Endothelial cell of umbilical vein (primary cell): ENCODE measurements at regions of chr10 and their contacts with region 1.

Region 1: DNA sequence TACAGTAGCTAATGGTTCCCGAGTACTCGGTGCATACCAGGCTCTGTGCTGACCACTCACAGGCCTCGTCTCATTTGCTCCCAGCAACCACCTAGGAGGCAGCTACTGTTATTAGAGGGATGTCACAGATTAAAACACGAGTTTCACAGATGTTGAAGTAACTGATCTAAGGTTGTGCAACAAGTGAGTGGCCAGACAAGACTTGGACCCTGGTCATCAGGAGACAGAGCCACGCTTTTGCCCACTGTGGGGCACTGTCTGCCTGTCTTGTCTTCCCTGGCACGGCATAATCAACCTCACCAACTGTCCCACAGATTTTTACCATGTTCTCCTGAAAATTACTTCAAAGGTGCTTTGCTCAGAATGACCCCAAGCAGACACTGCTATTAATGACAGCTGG is 111.6 kb upstream of the HABP2 start:
- DNase-seq: no peak
- H3K4me3 ChIP-seq: no peak overlapping the region
- H3K27ac ChIP-seq: no peak overlapping the region
- H3K4me1 ChIP-seq: no peaks in the 10 kb centered on the region
- H3K27me3 ChIP-seq: no peaks in the 10 kb centered on the region
- CTCF ChIP-seq: peak in 1 of 2 donors; percentile 2
- POLR2A ChIP-seq: no peak

Region 2: GRCh38 chr10:113213035-113213434 is 228.2 kb before region 1 on chr10:
- CTCF ChIA-PET with region 1: no interaction called
- POLR2A ChIA-PET with region 1: no interaction called
- dilution Hi-C with region 1: no loop called
- intact Hi-C with region 1: no loop called
- DNase-seq: no peak
- H3K4me3 ChIP-seq: no peak overlapping the region
- H3K27ac ChIP-seq: no peak overlapping the region
- H3K4me1 ChIP-seq: no peaks in the 10 kb centered on the region
- H3K27me3 ChIP-seq: peaks cover 0 to 8% of the 10 kb centered on the region in 2 experiments
- CTCF ChIP-seq: no peak
- POLR2A ChIP-seq: no peak

Region 3: GRCh38 chr10:113362645-113363433 is 78.4 kb before region 1 on chr10:
- CTCF ChIA-PET with region 1: no interaction called
- POLR2A ChIA-PET with region 1: no interaction called
- dilution Hi-C with region 1: no loop called
- intact Hi-C with region 1: no loop called
- DNase-seq: no peak
- H3K4me3 ChIP-seq: no peak overlapping the region
- H3K27ac ChIP-seq: no peak overlapping the region
- H3K4me1 ChIP-seq: no peaks in the 10 kb centered on the region
- H3K27me3 ChIP-seq: peaks cover 6 to 7% of the 10 kb centered on the region in 2 experiments
- CTCF ChIP-seq: no peak
- POLR2A ChIP-seq: no peak

Region 4: DNA sequence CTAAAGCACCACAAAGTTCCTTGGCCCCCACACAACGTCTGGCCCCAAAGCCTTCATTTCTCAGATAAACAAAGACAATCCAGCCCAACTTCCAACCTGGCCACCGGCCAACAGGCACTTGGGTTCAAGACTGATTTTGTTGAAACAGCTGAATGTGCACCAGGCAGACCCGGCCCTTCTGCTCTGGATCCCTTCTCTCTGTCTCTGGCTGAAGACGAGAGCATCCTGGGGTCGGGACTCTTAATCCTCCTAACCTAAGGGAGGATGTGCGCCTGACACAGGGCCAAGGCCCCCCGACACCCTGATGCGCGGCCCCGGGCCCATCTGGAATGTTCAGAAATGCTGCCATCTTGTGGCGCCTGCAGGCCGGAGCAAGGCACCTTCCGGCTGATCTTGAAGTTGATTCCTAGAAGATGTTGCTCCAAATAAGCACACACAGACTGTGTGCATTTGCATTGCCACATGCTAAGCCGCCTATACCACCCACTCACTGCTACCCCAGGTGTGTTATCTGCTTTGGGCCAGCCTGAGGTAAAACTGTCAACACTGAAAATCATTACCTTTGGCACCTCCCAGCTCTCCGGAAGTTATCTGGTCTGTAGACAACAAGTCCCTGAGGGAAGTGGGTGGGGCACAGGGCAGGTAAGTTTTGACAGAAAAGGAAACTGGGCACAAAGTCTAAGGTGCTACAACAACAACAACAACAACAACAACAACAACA is 13.3 kb after region 1 on chr10:
- CTCF ChIA-PET with region 1: interaction called, 14 read pairs
- POLR2A ChIA-PET with region 1: no interaction called
- dilution Hi-C with region 1: no loop called
- intact Hi-C with region 1: no loop called
- DNase-seq: peak; percentile 36
- H3K4me3 ChIP-seq: no peak overlapping the region
- H3K27ac ChIP-seq: no peak overlapping the region
- H3K4me1 ChIP-seq: no peaks in the 10 kb centered on the region
- H3K27me3 ChIP-seq: peaks cover 2 to 3% of the 10 kb centered on the region in 2 experiments
- CTCF ChIP-seq: peak; percentile 65 to 76
- POLR2A ChIP-seq: no peak